ENCODE measurements at regions of chr5 and their contacts with region 1.

Region 1: DNA sequence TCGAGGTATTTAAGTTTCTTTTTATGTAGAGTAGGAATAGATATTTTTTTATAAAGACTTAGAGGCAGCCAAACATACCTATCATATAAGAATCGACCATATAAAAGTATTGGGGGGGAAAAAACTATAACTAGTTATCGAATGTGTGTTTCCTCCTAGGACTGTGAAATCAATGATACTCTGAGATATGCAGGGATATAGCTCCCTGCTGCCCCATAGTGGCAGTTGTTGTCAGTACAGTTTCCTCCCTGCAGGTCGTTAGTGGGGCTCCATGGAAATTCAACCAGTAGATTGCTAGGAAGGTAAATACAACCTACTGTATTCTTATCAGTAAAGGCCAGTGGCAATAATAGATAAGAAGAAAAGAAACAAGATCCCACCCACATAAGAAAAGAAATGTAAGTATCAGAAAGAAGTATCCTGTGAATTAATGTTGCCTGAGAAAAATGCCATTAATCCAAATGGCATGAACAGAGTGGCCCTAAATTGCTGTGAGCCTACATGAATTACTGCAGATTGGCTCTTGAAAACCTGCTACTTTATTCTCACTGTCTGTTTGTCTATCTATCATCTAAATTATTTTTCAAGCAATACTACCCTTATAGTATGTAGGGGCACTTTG is 136.9 kb upstream of the FBN2 start:
- DNase-seq: no peak
- H3K4me3 ChIP-seq: no peak overlapping the region
- CTCF ChIP-seq: peak; percentile 76

Region 2: GRCh38 chr5:128516978-128517377 is 158.0 kb before region 1 on chr5:
- CTCF ChIA-PET with region 1: interaction called, 15 read pairs
- POLR2A ChIA-PET with region 1: no interaction called
- DNase-seq: no peak
- H3K4me3 ChIP-seq: no peak overlapping the region
- CTCF ChIP-seq: no peak

Region 3: DNA sequence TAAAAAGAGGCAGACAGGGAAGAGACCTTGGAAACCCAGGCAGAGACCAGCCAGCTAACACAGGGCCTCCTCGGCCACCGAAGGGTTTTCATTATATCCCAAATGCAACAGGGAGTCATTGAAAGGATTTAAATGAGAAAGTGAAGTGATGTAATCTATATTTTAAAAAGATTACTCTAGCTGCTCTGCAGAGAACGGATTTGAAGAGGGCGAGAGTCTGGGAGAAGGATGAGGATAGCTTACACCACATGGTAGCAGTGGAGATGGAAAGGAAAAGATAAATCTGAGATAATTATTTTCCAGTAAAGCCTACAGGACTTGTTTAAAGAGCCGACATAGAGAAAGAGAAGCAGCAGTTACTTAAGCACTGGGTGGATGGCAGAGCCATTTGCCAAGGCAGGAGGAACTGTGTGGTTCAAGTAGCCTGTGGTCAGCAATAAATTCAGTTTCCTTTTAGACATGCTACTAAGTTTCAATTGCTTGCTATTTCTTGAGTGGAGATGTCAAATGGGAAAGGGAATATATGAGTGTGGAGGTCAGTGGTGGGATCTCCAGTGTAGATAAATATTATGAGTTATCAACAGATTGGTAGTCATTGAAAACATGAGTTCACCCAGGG is 146.2 kb before region 1 on chr5:
- CTCF ChIA-PET with region 1: interaction called, 32 read pairs
- POLR2A ChIA-PET with region 1: no interaction called
- DNase-seq: no peak
- H3K4me3 ChIP-seq: no peak overlapping the region
- CTCF ChIP-seq: no peak

Region 4: GRCh38 chr5:128551476-128551875 is 123.5 kb before region 1 on chr5:
- CTCF ChIA-PET with region 1: interaction called, 16 read pairs
- POLR2A ChIA-PET with region 1: no interaction called
- DNase-seq: no peak
- H3K4me3 ChIP-seq: no peak overlapping the region
- CTCF ChIP-seq: no peak

Region 5: DNA sequence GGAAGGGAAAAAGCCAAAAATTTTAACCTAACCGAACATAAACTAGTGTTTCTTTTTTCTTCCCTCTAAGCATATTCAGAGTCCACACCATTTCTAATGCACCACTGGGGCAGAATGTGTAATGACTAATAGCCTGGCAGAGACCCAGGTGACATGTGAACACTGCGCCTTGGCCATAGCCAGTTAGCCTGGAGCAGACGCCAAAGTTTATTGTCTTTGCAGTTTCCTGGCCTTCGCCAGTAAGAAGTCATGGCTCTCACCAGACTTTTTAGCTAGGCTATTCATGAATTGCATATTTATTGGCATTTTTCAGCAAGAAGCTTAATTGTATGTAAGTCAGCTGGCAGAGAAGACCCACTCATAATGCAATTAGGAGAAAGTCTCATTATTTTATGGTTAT is 107.5 kb after region 1 on chr5:
- CTCF ChIA-PET with region 1: no interaction called
- POLR2A ChIA-PET with region 1: no interaction called
- DNase-seq: peak; percentile 38
- H3K4me3 ChIP-seq: no peak overlapping the region
- CTCF ChIP-seq: no peak

Region 6: GRCh38 chr5:128844354-128844923 is 169.5 kb after region 1 on chr5:
- CTCF ChIA-PET with region 1: interaction called, 10 read pairs
- POLR2A ChIA-PET with region 1: no interaction called
- DNase-seq: no peak
- H3K4me3 ChIP-seq: no peak overlapping the region
- CTCF ChIP-seq: peak; percentile 8